ENCODE measurements at regions of chr2 and their contacts with region 1.

Region 1: GRCh38 chr2:55441280-55441892 is 21.7 kb upstream of the CCDC88A start:
- DNase-seq: no peak
- H3K4me3 ChIP-seq: no peak overlapping the region
- H3K4me3 Mint-ChIP-seq: no peak overlapping the region
- H3K27ac ChIP-seq: no peak overlapping the region
- H3K27ac Mint-ChIP-seq: no peak overlapping the region
- H3K4me1 ChIP-seq: no peaks in the 10 kb centered on the region
- H3K4me1 Mint-ChIP-seq: no peaks in the 10 kb centered on the region
- H3K27me3 ChIP-seq: no peaks in the 10 kb centered on the region
- H3K27me3 Mint-ChIP-seq: peaks cover 0 to 2% (median 0%) of the 10 kb centered on the region in 3 donors
- CTCF ChIP-seq: no peak

Region 2: GRCh38 chr2:55408918-55409868 is 32.2 kb before region 1 on chr2:
- intact Hi-C with region 1: loop called in 1 of 2 experiments (anchors 2 kb)
- DNase-seq: peak in 1 of 3 donors; percentile 20
- H3K4me3 ChIP-seq: no peak overlapping the region
- H3K4me3 Mint-ChIP-seq: peak overlapping the region; percentile 20 to 66
- H3K27ac ChIP-seq: peak overlapping the region in 1 of 2 donors; percentile 67
- H3K27ac Mint-ChIP-seq: peak overlapping the region; percentile 50 to 84 (median 62)
- H3K4me1 ChIP-seq: peaks cover 0 to 3% of the 10 kb centered on the region in 2 donors
- H3K4me1 Mint-ChIP-seq: peaks cover 29% of the 10 kb centered on the region
- H3K27me3 ChIP-seq: no peaks in the 10 kb centered on the region
- H3K27me3 Mint-ChIP-seq: no peaks in the 10 kb centered on the region
- CTCF ChIP-seq: no peak

Region 3: GRCh38 chr2:55490554-55490953 is 49.2 kb after region 1 on chr2:
- intact Hi-C with region 1: no loop called
- DNase-seq: no peak
- H3K4me3 ChIP-seq: no peak overlapping the region
- H3K4me3 Mint-ChIP-seq: no peak overlapping the region
- H3K27ac ChIP-seq: no peak overlapping the region
- H3K27ac Mint-ChIP-seq: no peak overlapping the region
- H3K4me1 ChIP-seq: no peaks in the 10 kb centered on the region
- H3K4me1 Mint-ChIP-seq: peaks cover 4% of the 10 kb centered on the region
- H3K27me3 ChIP-seq: no peaks in the 10 kb centered on the region
- H3K27me3 Mint-ChIP-seq: no peaks in the 10 kb centered on the region
- CTCF ChIP-seq: no peak

Region 4: GRCh38 chr2:55565613-55566012 is 124.2 kb after region 1 on chr2:
- intact Hi-C with region 1: no loop called
- DNase-seq: no peak
- H3K4me3 ChIP-seq: no peak overlapping the region
- H3K4me3 Mint-ChIP-seq: no peak overlapping the region
- H3K27ac ChIP-seq: no peak overlapping the region
- H3K27ac Mint-ChIP-seq: peak overlapping the region in 1 of 7 donors; percentile 11
- H3K4me1 ChIP-seq: no peaks in the 10 kb centered on the region
- H3K4me1 Mint-ChIP-seq: no peaks in the 10 kb centered on the region
- H3K27me3 ChIP-seq: no peaks in the 10 kb centered on the region
- H3K27me3 Mint-ChIP-seq: no peaks in the 10 kb centered on the region
- CTCF ChIP-seq: no peak

Measured in CD14-positive monocyte (primary cell).